Prostate gland (tissue), 2 donors: ENCODE measurements at regions of chr1 and their contacts with region 1.

Region 1: GRCh38 chr1:6343506-6344405 is 49.8 kb downstream of the ACOT7 start:
- DNase-seq: peak; percentile 70
- H3K4me3 ChIP-seq: no peak overlapping the region
- H3K27ac ChIP-seq: no peak overlapping the region
- H3K4me1 ChIP-seq: no peaks in the 10 kb centered on the region
- H3K27me3 ChIP-seq: no peaks in the 10 kb centered on the region
- CTCF ChIP-seq: peak; percentile 81 to 96 (median 88)
- POLR2A ChIP-seq: no peak

Region 2: DNA sequence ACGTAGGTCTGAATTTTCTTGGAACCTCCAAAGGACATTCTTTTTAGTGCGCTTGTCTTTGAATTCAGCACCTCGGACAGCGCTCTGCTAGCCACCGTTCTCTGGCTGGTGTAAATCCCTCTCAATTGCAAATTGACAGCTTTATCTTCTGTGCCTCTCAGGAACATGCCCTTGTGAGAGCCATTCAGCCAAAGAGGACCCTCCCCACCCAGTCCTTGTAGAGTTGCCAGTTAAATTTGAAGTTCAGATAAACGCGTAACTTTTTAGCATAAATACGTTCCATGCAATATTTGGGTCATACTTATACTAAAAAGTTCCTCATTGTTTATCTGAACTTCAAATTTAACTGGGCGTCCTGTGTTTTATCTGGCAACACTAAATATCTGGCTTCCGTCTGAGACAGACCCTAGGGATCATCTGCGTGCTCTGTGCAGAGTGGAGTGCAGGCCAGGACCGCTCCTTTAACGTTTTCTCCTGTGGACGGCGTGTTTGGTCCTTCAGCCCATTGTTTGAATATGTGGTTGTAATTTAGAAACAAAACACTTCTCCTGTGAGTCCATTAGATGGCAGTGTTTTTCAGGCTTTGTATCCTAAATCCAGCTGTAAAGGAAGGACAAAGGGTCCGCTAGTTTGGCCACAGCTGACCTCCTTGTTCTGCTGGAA is 291.1 kb before region 1 on chr1:
- intact Hi-C with region 1: loop called (anchors 10 kb)
- DNase-seq: peak; percentile 70
- H3K4me3 ChIP-seq: no peak overlapping the region
- H3K27ac ChIP-seq: no peak overlapping the region
- H3K4me1 ChIP-seq: peaks cover 7% of the 10 kb centered on the region
- H3K27me3 ChIP-seq: no peaks in the 10 kb centered on the region
- CTCF ChIP-seq: peak in 3 of 4 experiments; percentile 44 to 58 (median 46)
- POLR2A ChIP-seq: no peak

Region 3: DNA sequence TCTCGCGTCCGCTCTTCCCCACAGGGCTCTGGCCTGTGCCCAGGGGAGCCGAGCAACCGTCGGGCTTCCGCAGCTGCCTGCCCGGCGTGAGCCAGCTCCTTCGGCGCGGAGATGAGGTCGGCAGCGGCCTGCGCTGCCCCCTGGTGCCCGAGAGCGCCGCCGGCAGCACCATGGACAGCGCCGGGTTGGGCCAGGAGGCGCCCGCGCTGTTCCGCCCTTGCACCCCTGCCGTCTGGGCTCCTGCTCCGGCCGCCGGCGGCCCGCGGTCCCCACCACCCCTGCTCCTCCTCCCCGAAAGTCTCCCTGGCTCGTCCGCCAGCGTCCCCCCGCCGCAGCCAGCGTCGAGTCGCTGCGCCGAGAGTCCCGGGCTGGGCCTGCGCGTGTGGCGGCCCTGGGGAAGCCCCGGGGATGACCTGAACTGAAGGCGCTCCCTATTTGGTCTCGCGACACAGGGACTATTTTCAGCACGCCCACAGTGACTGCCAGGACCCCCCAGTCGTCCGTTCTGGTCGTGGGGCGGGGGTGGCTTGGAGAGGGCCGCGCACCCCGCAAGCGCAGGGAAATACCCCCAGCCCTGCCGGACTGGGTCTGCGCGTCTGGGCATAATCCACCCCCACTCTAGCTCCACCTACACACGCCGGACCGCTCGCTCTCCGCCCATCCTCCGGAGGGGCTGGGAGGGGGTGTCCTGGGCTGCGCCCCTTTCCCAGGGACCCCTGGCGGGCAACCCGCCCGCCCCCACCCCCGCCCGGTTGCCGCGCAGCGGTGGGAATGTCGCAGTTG is 98.5 kb before region 1 on chr1:
- intact Hi-C with region 1: loop called (anchors 2 kb)
- DNase-seq: peak; percentile 64
- H3K4me3 ChIP-seq: peak overlapping the region in 1 of 2 donors; percentile 8
- H3K27ac ChIP-seq: no peak overlapping the region
- H3K4me1 ChIP-seq: peaks cover 12% of the 10 kb centered on the region
- H3K27me3 ChIP-seq: peaks cover 33% of the 10 kb centered on the region
- CTCF ChIP-seq: peak; percentile 53 to 93 (median 82)
- POLR2A ChIP-seq: no peak

Region 4: GRCh38 chr1:6393400-6394187 is 49.8 kb after region 1 on chr1 and contains the start of gene ACOT7:
- intact Hi-C with region 1: loop called (anchors 5 kb)
- DNase-seq: peak; percentile 88
- H3K4me3 ChIP-seq: peak within 1 kb of the TSS; percentile 59 to 77
- H3K27ac ChIP-seq: peak within 1 kb of the TSS; percentile 97 to 98
- H3K4me1 ChIP-seq: peaks cover 4% of the 10 kb centered on the region
- H3K27me3 ChIP-seq: no peaks in the 10 kb centered on the region
- CTCF ChIP-seq: peak in 3 of 4 experiments; percentile 19 to 49 (median 39)
- POLR2A ChIP-seq: peak; percentile 76
- total RNA-seq, gene ACOT7: 16.9 to 24.9 TPM

Region 5: DNA sequence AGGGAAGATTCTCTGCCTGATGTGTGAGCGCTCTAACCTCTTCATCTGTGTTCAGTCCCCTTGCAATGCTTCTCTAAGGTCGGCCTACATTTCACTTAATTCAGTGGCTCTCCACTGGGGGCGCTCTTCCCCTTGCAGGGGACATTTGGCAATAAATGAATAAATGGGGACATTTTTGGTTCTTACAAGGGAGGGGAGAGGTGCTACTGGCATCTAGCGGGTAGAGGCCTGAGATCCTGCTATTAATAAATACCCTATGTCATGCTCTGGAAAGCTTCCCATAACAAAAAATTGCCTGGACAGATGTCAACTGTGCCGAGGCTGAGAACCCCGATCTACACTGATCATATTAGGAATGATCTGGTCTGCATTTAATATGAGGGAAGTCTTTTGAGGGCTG is 383.8 kb after region 1 on chr1:
- intact Hi-C with region 1: no loop called
- DNase-seq: no peak
- H3K4me3 ChIP-seq: no peak overlapping the region
- H3K27ac ChIP-seq: no peak overlapping the region
- H3K4me1 ChIP-seq: no peaks in the 10 kb centered on the region
- H3K27me3 ChIP-seq: no peaks in the 10 kb centered on the region
- CTCF ChIP-seq: peak; percentile 26 to 67 (median 54)
- POLR2A ChIP-seq: no peak